ENCODE measurements at regions of chr2 and their contacts with region 1.

Region 1: GRCh38 chr2:31170071-31170698 is 31.9 kb upstream of the GALNT14 start:
- DNase-seq: peak; percentile 23 to 72
- H3K4me3 ChIP-seq: no peak overlapping the region
- H3K27ac ChIP-seq: no peak overlapping the region
- H3K4me1 ChIP-seq: no peaks in the 10 kb centered on the region
- H3K27me3 ChIP-seq: no peaks in the 10 kb centered on the region
- CTCF ChIP-seq: peak; percentile 86 to 96 (median 96)
- EP300 ChIP-seq: no peak
- POLR2A ChIP-seq: no peak
- RAD21 ChIP-seq: peak; percentile 97 to 98

Region 2: GRCh38 chr2:30979822-30980245 is 190.4 kb before region 1 on chr2:
- CTCF ChIA-PET with region 1: interaction called, 17 read pairs
- POLR2A ChIA-PET with region 1: no interaction called
- DNase-seq: no peak
- H3K4me3 ChIP-seq: no peak overlapping the region
- H3K27ac ChIP-seq: no peak overlapping the region
- H3K4me1 ChIP-seq: no peaks in the 10 kb centered on the region; a peak in 1 of 7 replicates
- H3K27me3 ChIP-seq: no peaks in the 10 kb centered on the region
- CTCF ChIP-seq: peak in 2 of 3 experiments; percentile 17 to 72; a peak in 3 of 4 replicates
- EP300 ChIP-seq: no peak
- POLR2A ChIP-seq: no peak
- RAD21 ChIP-seq: peak in 1 of 2 experiments; percentile 29; a peak in 1 of 4 replicates

Region 3: DNA sequence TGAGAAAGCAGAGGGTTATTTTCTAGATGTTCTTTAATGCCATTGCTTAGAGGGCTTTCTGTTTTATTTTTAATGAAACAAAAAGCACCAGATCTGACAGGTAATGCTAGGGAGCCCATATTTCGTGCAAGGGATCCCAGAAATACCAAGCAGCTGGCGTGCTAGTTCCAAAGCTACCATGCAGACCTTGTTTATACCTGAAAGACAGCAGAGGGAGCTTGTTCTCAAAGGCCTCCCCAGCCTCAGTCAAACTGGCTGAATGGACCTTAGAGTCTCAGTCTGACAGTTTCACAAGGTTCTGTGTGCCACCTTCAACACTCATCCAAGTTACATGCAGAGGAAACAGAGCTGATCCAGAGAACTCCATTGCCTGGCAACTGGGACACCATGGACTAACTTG is 80.5 kb before region 1 on chr2:
- CTCF ChIA-PET with region 1: interaction called, 13 read pairs
- POLR2A ChIA-PET with region 1: no interaction called
- DNase-seq: no peak
- H3K4me3 ChIP-seq: no peak overlapping the region
- H3K27ac ChIP-seq: no peak overlapping the region
- H3K4me1 ChIP-seq: peaks cover 0 to 2% (median 0%) of the 10 kb centered on the region in 4 experiments; a peak in 1 of 7 replicates
- H3K27me3 ChIP-seq: no peaks in the 10 kb centered on the region
- CTCF ChIP-seq: peak in 1 of 3 experiments; percentile 27; a peak in 1 of 4 replicates
- EP300 ChIP-seq: no peak
- POLR2A ChIP-seq: no peak
- RAD21 ChIP-seq: peak in 1 of 2 experiments; percentile 29; a peak in 2 of 4 replicates

Region 4: DNA sequence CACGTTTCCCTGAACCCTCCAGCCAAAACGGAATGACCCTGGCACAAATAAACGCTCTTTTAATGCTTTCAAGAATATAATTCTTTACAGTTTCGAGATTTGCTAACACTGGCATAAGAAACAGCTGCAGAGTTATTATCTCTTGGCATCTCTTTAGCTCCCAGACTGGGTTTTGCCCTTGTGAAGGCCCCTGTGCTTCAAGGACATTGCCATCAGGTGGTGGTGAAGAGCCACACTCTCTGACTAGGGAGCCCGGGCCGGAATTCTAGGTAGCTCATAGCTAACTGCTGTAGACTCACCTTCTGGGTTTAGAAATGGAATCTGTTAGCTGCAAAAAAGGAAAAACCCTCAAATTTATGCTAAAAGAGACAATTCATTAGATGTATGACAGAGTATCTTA is 18.7 kb before region 1 on chr2:
- CTCF ChIA-PET with region 1: interaction called, 91 read pairs
- POLR2A ChIA-PET with region 1: no interaction called
- DNase-seq: no peak
- H3K4me3 ChIP-seq: no peak overlapping the region
- H3K27ac ChIP-seq: no peak overlapping the region
- H3K4me1 ChIP-seq: no peaks in the 10 kb centered on the region
- H3K27me3 ChIP-seq: no peaks in the 10 kb centered on the region; a peak in 2 of 7 replicates
- CTCF ChIP-seq: peak; percentile 25 to 41 (median 39); a peak in 3 of 4 replicates
- EP300 ChIP-seq: no peak
- POLR2A ChIP-seq: no peak
- RAD21 ChIP-seq: peak; percentile 44 to 61

Region 5: DNA sequence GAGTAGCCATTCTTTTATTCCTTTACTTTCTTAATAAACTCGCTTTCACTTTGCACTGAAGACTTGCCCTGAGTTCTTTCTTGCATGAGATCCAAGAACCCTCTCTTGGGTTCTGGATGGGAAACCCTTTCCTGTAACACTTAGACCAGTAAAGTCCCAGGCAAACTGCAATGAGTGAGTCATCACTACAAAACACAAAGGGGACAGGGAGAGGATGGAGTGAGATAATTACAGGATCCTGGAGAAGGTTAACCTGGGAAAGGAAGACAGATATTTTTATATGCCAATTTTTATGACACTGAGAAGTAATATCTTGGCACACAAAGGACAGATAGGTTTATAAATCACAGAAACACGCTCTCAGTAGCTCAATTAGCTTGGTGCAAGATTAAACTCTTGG is 112.4 kb after region 1 on chr2:
- CTCF ChIA-PET with region 1: no interaction called
- POLR2A ChIA-PET with region 1: no interaction called
- DNase-seq: no peak
- H3K4me3 ChIP-seq: no peak overlapping the region
- H3K27ac ChIP-seq: no peak overlapping the region
- H3K4me1 ChIP-seq: no peaks in the 10 kb centered on the region
- H3K27me3 ChIP-seq: no peaks in the 10 kb centered on the region
- CTCF ChIP-seq: no peak
- EP300 ChIP-seq: no peak
- POLR2A ChIP-seq: no peak
- RAD21 ChIP-seq: no peak

Measured in H1 (cell line).